ENCODE measurements at regions of chr18 and their contacts with region 1.

Region 1: GRCh38 chr18:36688020-36688965 is 140.5 kb downstream of the TPGS2 start:
- DNase-seq: peak; percentile 9
- ATAC-seq: peak; percentile 91
- H3K4me3 ChIP-seq: no peak overlapping the region
- H3K27ac ChIP-seq: no peak overlapping the region
- H3K4me1 ChIP-seq: no peaks in the 10 kb centered on the region
- H3K27me3 ChIP-seq: no peaks in the 10 kb centered on the region
- CTCF ChIP-seq: peak; percentile 76 to 91 (median 89)
- EP300 ChIP-seq: no peak
- POLR2A ChIP-seq: no peak
- RAD21 ChIP-seq: peak; percentile 76

Region 2: DNA sequence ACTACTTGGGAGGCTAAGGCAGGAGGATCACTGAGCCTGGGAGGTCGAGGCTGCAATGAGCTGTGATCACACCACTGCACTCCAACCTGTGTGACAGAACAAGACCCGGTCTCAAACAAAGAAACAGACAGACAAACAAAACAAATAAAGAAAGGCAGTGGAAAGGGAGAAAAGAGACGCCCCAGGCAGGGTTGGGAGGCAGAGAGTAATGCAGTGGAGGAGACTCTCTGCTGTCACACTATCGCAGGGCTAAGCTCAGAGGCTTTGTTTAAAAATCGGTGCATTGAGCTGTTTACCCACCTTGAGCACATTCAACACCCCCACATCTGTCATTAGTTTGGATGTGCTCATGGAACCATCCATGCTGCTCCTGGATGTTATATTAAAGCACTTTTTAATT is 800.0 kb before region 1 on chr18:
- CTCF ChIA-PET with region 1: no interaction called
- POLR2A ChIA-PET with region 1: no interaction called
- RAD21 ChIA-PET with region 1: no interaction called
- SMC1A ChIA-PET with region 1: no interaction called
- in situ Hi-C with region 1: no loop called
- intact Hi-C with region 1: no loop called
- DNase-seq: no peak
- ATAC-seq: no peak
- H3K4me3 ChIP-seq: no peak overlapping the region
- H3K27ac ChIP-seq: no peak overlapping the region
- H3K4me1 ChIP-seq: no peaks in the 10 kb centered on the region
- H3K27me3 ChIP-seq: no peaks in the 10 kb centered on the region; a peak in 1 of 4 replicates
- CTCF ChIP-seq: no peak
- EP300 ChIP-seq: no peak
- POLR2A ChIP-seq: no peak
- RAD21 ChIP-seq: no peak

Region 3: DNA sequence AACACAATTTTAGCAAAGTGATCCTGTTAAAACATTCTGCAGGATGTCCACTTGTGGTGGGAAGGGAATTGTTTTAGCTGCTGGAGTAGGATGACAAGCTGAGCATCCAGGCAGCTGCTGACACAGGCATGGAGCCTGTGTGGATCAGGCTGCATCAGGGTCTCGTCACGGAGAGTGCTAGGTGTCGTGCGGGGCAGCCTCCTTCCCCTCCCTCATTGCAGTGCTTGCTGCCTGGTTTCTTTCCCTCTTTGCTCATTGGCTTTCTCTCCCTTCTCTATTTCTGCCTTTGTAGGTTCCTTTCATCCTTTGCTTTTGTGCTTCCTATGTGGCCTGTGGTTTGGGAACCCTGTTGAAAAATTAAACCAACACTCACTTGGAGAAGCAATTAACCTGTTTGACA is 32.4 kb before region 1 on chr18:
- CTCF ChIA-PET with region 1: interaction called, 17 read pairs
- POLR2A ChIA-PET with region 1: no interaction called
- RAD21 ChIA-PET with region 1: no interaction called
- SMC1A ChIA-PET with region 1: interaction called, 8 read pairs
- in situ Hi-C with region 1: no loop called
- intact Hi-C with region 1: no loop called
- DNase-seq: no peak
- ATAC-seq: no peak
- H3K4me3 ChIP-seq: no peak overlapping the region
- H3K27ac ChIP-seq: no peak overlapping the region
- H3K4me1 ChIP-seq: no peaks in the 10 kb centered on the region
- H3K27me3 ChIP-seq: no peaks in the 10 kb centered on the region
- CTCF ChIP-seq: no peak
- EP300 ChIP-seq: no peak
- POLR2A ChIP-seq: no peak
- RAD21 ChIP-seq: no peak

Region 4: GRCh38 chr18:36711813-36712444 is 23.6 kb after region 1 on chr18:
- CTCF ChIA-PET with region 1: interaction called, 15 read pairs
- POLR2A ChIA-PET with region 1: no interaction called
- RAD21 ChIA-PET with region 1: no interaction called
- SMC1A ChIA-PET with region 1: interaction called, 3 read pairs
- in situ Hi-C with region 1: no loop called
- intact Hi-C with region 1: no loop called
- DNase-seq: no peak
- ATAC-seq: no peak
- H3K4me3 ChIP-seq: no peak overlapping the region
- H3K27ac ChIP-seq: no peak overlapping the region
- H3K4me1 ChIP-seq: no peaks in the 10 kb centered on the region
- H3K27me3 ChIP-seq: no peaks in the 10 kb centered on the region
- CTCF ChIP-seq: no peak
- EP300 ChIP-seq: no peak
- POLR2A ChIP-seq: no peak
- RAD21 ChIP-seq: no peak

Region 5: GRCh38 chr18:36757081-36757480 is 68.8 kb after region 1 on chr18:
- CTCF ChIA-PET with region 1: interaction called, 4 read pairs
- POLR2A ChIA-PET with region 1: no interaction called
- RAD21 ChIA-PET with region 1: no interaction called
- SMC1A ChIA-PET with region 1: no interaction called
- in situ Hi-C with region 1: no loop called
- intact Hi-C with region 1: loop called (anchors 1 kb)
- DNase-seq: no peak
- ATAC-seq: peak; percentile 48
- H3K4me3 ChIP-seq: no peak overlapping the region
- H3K27ac ChIP-seq: no peak overlapping the region
- H3K4me1 ChIP-seq: no peaks in the 10 kb centered on the region
- H3K27me3 ChIP-seq: no peaks in the 10 kb centered on the region
- CTCF ChIP-seq: peak; percentile 31 to 54 (median 38); a peak in 5 of 6 replicates
- EP300 ChIP-seq: no peak
- POLR2A ChIP-seq: no peak
- RAD21 ChIP-seq: peak; percentile 58

Region 6: DNA sequence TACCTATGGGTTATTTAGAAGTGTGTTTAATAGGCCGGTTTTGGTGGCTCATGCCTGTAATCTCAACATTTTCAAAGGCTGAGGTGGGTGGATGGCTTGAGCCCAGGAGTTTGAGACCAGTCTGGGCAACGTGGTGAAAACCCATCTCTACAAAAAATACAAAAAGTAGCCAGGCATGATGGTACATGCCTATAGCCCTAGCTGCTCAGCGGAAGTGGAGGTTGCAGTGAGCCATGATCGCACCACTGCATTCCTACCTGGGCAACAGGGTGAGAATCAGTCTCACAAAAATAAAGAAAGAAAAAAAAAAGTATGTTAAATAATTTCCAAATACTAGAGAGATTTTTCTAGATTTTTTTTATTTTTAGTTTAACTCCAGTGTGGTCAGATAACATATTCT is 456.6 kb after region 1 on chr18:
- CTCF ChIA-PET with region 1: no interaction called
- POLR2A ChIA-PET with region 1: no interaction called
- RAD21 ChIA-PET with region 1: no interaction called
- SMC1A ChIA-PET with region 1: no interaction called
- in situ Hi-C with region 1: no loop called
- intact Hi-C with region 1: no loop called
- DNase-seq: no peak
- ATAC-seq: no peak
- H3K4me3 ChIP-seq: no peak overlapping the region
- H3K27ac ChIP-seq: no peak overlapping the region
- H3K4me1 ChIP-seq: no peaks in the 10 kb centered on the region
- H3K27me3 ChIP-seq: no peaks in the 10 kb centered on the region
- CTCF ChIP-seq: no peak
- EP300 ChIP-seq: no peak
- POLR2A ChIP-seq: no peak
- RAD21 ChIP-seq: no peak